ENCODE measurements at regions of chr21 and their contacts with region 1.

Region 1: GRCh38 chr21:36747815-36748383 is 49.0 kb downstream of the SIM2 start:
- DNase-seq: peak in 40 of 42 donors; percentile 35 to 88 (median 74)

Region 2: DNA sequence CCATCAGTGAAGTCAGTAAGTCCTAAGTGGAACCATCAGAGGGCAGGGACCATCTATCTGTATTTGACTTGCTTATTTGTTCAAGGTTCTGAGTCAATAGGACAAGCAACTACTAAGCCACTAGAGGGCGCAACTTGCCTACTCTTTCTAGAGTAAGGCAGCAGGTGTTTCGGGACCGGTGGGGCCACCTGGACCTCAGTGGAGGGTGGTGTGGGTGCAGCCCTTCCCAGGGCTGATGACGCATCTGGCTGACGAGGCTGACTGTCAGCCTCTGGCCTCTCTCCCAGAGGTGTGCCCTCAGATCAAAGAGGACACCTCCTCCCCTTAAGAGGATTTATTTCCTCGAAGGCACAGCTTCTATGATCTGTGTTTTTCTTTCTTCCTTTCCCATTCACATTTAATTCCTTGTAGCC is 606.4 kb before region 1 on chr21:
- intact Hi-C with region 1: no loop called
- DNase-seq: peak in 41 of 42 donors; percentile 28 to 94 (median 82)

Region 3: GRCh38 chr21:36854391-36854790 is 106.5 kb after region 1 on chr21:
- intact Hi-C with region 1: loop called (anchors 5 kb)
- DNase-seq: peak in 39 of 42 donors; percentile 13 to 89 (median 67)